ENCODE measurements at regions of chr20 and their contacts with region 1.

Region 1: DNA sequence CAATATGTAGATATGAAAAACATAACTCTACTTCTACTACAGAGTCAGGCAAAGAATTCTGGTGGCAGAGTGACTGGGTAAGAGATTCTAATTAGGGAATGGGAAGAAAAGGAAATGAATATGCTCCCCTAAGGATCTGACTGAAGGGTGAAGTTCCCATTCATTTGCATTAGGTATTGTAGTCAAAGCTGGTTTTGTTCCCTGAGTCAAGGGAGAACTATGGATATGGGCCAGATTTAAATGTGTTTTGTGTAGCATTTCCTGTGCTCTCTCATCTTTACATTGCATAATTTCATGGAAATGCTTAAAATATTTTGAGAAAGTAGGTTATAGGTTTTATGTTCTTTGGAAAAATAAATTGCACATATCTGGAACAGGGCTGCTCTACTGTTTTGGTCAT is 299.7 kb downstream of the BTBD3 start:
- DNase-seq: no peak
- ATAC-seq: no peak
- H3K4me3 ChIP-seq: no peak overlapping the region
- H3K27ac ChIP-seq: no peak overlapping the region
- H3K4me1 ChIP-seq: no peaks in the 10 kb centered on the region
- H3K27me3 ChIP-seq: no peaks in the 10 kb centered on the region
- CTCF ChIP-seq: no peak

Region 2: DNA sequence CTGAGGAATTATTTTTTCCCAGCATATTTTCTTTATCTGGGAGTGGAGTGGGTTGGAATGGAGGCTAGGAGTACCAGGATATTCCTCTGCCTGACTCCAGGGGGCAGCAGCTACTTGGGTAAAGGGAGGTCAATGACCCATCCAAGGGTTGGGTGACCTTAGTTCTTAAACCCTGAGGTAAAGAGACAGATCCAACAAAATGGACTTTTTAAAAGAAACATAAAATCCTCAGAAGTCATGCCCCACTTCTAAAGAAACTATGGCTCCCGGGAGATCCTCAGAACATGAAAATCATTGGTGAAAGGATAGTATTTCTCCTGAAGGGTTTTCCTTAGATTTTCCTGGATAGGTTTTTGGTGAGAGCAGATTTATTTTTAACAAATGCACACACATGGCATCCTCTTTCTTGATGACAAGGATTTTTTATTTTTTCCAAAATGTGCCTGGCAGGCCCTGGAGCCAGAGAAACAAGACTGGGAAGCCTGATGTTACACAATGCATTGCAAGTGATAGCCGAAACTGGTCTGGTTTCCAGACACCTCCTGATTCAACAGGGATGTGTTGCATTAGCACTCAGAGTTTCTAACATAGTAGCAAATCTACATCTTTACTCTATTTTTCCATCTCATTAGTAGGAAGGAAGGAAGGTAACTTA is 540.6 kb before region 1 on chr20:
- intact Hi-C with region 1: loop called in 1 of 10 experiments (anchors 10 kb)
- DNase-seq: peak; percentile 46 to 56
- ATAC-seq: peak in 7 of 8 donors; percentile 82 to 93 (median 87)
- H3K4me3 ChIP-seq: peak overlapping the region in 1 of 10 donors; percentile 23
- H3K27ac ChIP-seq: peak overlapping the region in 3 of 10 donors; percentile 11 to 41 (median 19)
- H3K4me1 ChIP-seq: peaks cover 0 to 19% (median 4%) of the 10 kb centered on the region in 9 donors
- H3K27me3 ChIP-seq: peaks cover 0 to 7% (median 0%) of the 10 kb centered on the region in 7 donors
- CTCF ChIP-seq: peak; percentile 62 to 92 (median 84)

Region 3: DNA sequence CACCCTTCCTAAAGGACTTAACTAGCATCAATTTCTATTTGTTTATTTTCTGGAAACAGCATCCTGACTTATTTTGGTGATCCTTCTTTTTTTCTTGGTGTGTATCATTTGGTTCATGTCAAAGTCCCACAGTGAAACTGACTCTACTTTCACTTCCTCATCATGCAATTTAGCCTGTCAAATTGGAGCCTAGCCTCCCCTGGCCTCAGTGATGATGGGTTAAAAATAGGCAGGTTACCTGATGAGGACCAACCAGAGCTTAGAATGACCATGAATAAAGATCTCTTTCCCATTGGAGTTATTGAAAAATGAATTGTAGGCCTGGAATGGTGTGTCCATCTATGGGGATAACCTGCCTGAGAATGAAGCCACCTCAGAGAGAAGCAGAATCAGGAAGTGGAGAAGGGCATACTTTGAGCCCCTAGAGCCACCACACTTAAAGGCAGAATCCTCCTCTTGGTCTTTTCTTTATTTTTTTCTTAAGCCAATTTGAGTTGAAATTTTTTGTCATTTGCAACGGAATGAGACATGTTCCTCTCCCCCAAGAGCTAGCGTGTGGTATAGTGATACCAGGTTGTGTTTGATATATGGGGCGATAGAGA is 194.1 kb before region 1 on chr20:
- intact Hi-C with region 1: no loop called
- DNase-seq: no peak
- ATAC-seq: no peak
- H3K4me3 ChIP-seq: no peak overlapping the region
- H3K27ac ChIP-seq: no peak overlapping the region
- H3K4me1 ChIP-seq: peaks cover 0 to 3% (median 0%) of the 10 kb centered on the region in 9 donors
- H3K27me3 ChIP-seq: no peaks in the 10 kb centered on the region
- CTCF ChIP-seq: no peak